GM23248 (cell line): ENCODE measurements at regions of chr1 and their contacts with region 1.

Region 1: DNA sequence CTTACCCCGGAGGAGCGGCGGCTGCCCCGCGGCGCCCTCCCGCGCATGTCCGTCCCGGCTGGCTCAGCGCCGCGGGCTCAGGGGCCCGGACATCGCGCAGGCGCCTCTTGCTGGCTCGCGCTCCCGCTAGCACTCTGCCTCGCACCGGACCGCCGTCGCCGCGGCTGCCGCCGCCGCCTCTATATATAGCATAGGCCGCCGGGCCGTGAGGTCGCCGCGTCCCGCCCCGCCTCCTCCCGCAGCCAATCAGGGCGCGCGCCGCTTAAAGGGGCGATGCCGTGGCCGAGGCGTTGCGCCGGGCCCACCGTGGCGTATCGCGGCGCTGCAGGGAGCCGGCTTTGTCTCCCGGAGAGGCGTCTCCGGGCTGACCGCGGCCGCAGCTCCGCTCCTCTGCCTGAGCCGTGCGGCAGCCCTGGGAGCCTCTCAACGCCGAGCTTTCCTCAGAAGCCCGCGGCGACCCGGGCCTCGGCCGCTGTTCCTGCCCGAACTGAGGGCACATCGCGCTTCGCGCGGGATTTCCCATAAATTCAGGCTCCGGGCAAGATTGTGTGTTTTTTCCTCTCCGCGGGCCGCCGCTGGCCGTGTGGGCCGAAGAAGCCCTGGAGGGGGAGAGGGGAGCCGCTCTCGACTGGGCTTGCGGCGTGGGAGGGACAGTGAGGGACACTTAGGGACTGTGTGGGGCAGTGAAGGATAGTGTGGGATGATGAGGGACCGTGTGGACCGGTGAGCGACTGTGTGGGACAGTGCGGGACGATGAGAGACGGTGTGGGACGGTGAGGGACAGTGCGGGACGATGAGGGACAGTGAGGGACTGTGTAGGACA is at the start of gene ERRFI1:
- DNase-seq: peak; percentile 97
- H3K4me3 ChIP-seq: peak within 1 kb of the TSS; percentile 80
- H3K27ac ChIP-seq: peak within 1 kb of the TSS; percentile 85
- H3K4me1 ChIP-seq: peaks cover 48% of the 10 kb centered on the region
- H3K27me3 ChIP-seq: no peaks in the 10 kb centered on the region
- total RNA-seq, gene ERRFI1: 50.8 and 55.1 TPM in 2 replicates

Region 2: GRCh38 chr1:8238851-8239305 is 212.5 kb after region 1 on chr1:
- in situ Hi-C with region 1: loop called (anchors 25 kb)
- DNase-seq: peak; percentile 61
- H3K4me3 ChIP-seq: peak overlapping the region; percentile 63
- H3K27ac ChIP-seq: peak overlapping the region; percentile 84
- H3K4me1 ChIP-seq: peaks cover 14% of the 10 kb centered on the region
- H3K27me3 ChIP-seq: no peaks in the 10 kb centered on the region

Region 3: DNA sequence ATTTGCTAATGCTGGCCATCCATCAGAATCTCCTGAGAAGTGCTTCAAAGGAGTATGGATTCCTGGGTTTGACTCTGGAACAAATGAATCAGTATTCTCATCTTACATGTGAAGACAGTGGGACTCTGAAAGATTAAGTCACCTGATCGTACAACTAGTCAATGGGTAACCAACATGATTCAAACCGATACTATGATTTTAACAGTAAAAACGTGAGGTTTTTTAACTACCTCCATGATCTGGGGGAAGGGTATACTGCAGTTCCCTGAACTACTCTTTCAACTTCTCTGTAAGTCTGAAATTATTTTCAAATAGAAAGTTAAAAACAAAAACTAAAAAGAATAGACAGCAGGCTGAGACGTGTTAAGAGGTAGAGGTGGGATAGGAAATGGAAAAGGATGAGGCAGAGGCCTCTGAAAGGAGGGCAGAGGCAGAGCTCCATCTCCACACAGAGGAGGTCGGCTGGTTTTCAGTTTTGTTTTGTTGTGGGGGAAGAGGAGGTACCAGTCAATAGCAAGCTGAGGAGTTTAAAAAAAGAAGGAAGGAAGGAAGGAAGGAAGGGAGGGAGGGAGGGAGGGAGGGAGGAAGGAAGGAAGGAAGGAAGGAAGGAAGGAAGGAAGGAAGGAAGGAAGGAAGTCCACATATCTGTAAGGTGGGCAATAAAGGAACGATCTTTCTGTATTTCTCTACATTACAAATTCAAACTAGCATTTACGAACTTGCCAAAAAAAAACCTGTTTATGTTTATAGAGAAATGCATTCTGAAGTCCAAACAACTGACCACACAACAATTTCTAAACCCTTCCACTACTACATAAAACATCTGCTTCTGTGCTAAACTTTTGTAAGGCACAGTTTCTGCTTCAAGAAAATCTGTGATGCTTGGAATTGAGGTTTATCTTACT is 577.9 kb after region 1 on chr1:
- in situ Hi-C with region 1: no loop called
- DNase-seq: no peak
- H3K4me3 ChIP-seq: no peak overlapping the region
- H3K27ac ChIP-seq: no peak overlapping the region
- H3K4me1 ChIP-seq: no peaks in the 10 kb centered on the region
- H3K27me3 ChIP-seq: no peaks in the 10 kb centered on the region